ENCODE measurements at regions of chr12 and their contacts with region 1.

Region 1: GRCh38 chr12:119258149-119258548 is 76.4 kb upstream of the CCDC60 start:
- DNase-seq: no peak
- H3K4me3 ChIP-seq: no peak overlapping the region
- H3K27ac ChIP-seq: no peak overlapping the region
- H3K4me1 ChIP-seq: peaks cover 0 to 4% (median 1%) of the 10 kb centered on the region in 4 donors
- H3K27me3 ChIP-seq: no peaks in the 10 kb centered on the region
- CTCF ChIP-seq: no peak
- EP300 ChIP-seq: no peak
- POLR2A ChIP-seq: no peak

Region 2: DNA sequence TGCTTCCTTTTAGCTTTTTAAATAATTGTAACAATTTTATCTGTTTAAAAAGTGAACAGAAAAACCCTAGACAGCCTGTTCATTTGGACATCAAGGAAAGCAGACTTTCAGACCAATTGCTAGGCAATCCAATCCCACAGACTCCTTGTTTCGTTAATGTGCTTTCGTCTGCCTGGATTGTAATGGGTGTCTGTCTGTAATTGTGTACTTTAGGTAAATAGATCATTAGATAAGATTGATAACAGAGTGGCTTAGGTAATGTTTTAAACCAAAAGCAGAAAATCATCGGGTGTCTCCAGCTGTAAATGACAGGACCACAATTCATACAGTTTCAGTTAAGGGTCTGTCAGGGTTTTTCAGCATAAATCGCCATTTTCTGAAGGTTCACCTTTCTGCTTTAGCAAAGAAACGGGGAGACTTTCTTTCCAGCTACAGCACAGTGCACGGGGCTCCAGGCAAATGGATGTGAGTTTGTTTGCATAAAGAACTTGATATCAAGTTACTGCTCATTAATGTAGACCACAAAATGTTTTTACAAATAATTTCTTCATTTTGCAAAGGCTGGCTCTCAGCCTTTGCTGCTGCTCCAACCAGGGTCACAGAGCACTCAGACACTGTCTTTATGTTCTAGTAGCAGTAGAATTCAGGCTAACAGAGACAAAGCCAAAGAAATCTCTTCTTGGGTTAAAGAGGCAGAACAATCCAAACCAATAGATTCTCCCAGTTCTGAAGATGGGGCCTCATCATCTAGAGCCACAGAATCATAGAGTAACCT is 96.2 kb after region 1 on chr12:
- intact Hi-C with region 1: loop called (anchors 5 kb)
- DNase-seq: no peak
- H3K4me3 ChIP-seq: no peak overlapping the region
- H3K27ac ChIP-seq: no peak overlapping the region
- H3K4me1 ChIP-seq: peaks cover 0 to 7% (median 0%) of the 10 kb centered on the region in 4 donors
- H3K27me3 ChIP-seq: no peaks in the 10 kb centered on the region
- CTCF ChIP-seq: no peak
- EP300 ChIP-seq: no peak
- POLR2A ChIP-seq: no peak

Region 3: DNA sequence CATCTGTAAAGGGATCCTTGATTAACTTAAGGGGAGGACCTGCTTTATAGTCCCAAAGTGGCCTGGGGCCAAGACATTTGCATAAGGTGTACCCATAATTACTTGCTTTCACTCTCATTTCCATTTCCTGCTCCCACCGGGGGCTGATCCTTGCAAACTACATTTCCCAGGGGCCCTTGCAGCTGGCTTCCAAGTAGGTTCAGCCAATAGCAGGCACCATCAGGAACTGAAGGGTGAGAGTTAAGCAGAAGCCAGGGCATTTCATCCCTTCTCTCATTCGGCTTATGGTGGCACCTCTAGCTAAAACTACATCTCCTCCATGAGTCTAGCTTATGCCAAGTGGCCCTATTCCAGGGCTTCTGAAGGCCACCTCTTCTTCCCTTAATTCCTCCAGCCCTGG is 165.1 kb after region 1 on chr12:
- intact Hi-C with region 1: no loop called
- DNase-seq: no peak
- H3K4me3 ChIP-seq: no peak overlapping the region
- H3K27ac ChIP-seq: no peak overlapping the region
- H3K4me1 ChIP-seq: no peaks in the 10 kb centered on the region
- H3K27me3 ChIP-seq: no peaks in the 10 kb centered on the region
- CTCF ChIP-seq: no peak
- EP300 ChIP-seq: no peak
- POLR2A ChIP-seq: no peak